Uterus (tissue), 4 donors: ENCODE measurements at regions of chr7 and their contacts with region 1.

Region 1: GRCh38 chr7:27143023-27143949 is at the start of gene HOXA5:
- DNase-seq: peak; percentile 71 to 73
- H3K4me3 ChIP-seq: peak within 1 kb of the TSS in 1 of 2 donors; percentile 13
- H3K27ac ChIP-seq: peak within 1 kb of the TSS in 1 of 2 donors; percentile 69
- H3K4me1 ChIP-seq: no peaks in the 10 kb centered on the region
- H3K27me3 ChIP-seq: no peaks in the 10 kb centered on the region
- CTCF ChIP-seq: peak in 3 of 4 experiments; percentile 57 to 86 (median 58)
- POLR2A ChIP-seq: peak; percentile 27 to 30
- total RNA-seq, gene HOXA5: 10.7 to 61.0 (median 18.9) TPM

Region 2: GRCh38 chr7:27025270-27025669 is 118.0 kb before region 1 on chr7:
- intact Hi-C with region 1: no loop called
- DNase-seq: no peak
- H3K4me3 ChIP-seq: no peak overlapping the region
- H3K27ac ChIP-seq: no peak overlapping the region
- H3K4me1 ChIP-seq: no peaks in the 10 kb centered on the region
- H3K27me3 ChIP-seq: no peaks in the 10 kb centered on the region
- CTCF ChIP-seq: no peak
- POLR2A ChIP-seq: no peak

Region 3: DNA sequence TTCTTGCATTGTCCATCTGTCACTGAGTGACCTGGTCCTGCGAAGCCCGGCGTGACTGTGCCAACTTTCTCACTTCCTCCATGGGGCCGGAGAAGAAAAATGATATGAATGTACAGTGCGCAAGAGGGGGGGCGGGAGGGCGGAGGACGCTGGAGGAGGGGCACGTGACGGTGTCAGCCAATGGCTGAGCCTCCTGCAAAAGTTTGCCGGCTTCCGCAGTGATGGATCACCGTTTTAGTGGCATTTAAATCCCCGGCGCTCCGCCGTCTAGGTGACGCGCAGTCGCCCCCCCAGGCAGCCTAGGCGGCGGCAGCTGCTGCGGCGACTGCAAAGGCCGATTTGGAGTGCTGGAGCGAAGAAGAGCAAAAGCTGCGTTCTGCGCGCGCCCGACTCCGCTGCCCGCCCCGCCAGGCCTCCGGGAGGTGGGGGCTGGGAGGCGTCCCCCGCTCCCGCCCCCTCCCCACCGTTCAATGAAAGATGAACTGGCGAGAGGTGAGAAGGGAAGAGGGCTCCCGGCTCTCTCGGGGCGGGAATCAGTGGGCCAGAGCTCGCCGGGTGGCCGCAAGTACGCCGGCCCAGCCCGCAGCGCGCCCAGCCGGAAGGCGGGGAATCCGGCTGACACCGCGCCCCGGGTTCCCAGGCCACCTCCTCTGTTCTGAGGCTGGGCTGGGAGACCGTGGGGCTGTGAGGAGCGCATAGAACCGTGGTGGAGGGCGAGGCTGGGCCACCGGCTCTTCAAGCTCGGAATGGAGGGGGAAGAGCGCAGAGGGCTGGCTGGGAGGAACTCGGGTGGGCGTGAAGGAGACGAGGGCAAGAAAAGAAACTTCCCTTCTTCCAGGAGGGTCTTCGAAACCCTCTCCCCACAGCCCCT is 47.2 kb before region 1 on chr7 and contains the start of gene HOXA1:
- intact Hi-C with region 1: loop called (anchors 10 kb)
- DNase-seq: peak; percentile 76
- H3K4me3 ChIP-seq: peak within 1 kb of the TSS; percentile 64 to 72
- H3K27ac ChIP-seq: peak within 1 kb of the TSS; percentile 59 to 74
- H3K4me1 ChIP-seq: peaks cover 8 to 13% of the 10 kb centered on the region in 2 donors
- H3K27me3 ChIP-seq: no peaks in the 10 kb centered on the region
- CTCF ChIP-seq: no peak
- POLR2A ChIP-seq: peak in 1 of 2 donors; percentile 50
- total RNA-seq, gene HOXA1: 0.28 to 2.0 (median 1.5) TPM

Region 4: DNA sequence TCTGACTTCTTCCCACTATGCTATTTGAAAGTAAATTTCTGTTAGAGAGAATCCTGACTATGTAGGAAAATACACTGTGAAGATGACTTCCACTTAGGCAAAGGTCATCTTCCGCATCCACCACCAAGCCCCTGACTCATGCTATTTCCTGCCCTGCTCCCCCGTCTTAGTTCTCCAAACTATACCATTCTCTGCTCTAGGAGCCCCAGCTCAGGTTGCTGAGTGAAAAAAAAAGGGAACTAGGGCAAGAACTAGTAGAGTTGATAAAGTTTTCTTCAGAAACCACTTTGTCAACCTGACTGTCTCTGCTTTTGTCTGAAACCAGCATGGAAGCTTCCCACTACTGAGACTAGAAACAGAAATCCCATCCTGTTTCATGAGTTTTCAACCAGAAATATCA is 196.2 kb after region 1 on chr7:
- intact Hi-C with region 1: no loop called
- DNase-seq: no peak
- H3K4me3 ChIP-seq: no peak overlapping the region
- H3K27ac ChIP-seq: no peak overlapping the region
- H3K4me1 ChIP-seq: no peaks in the 10 kb centered on the region
- H3K27me3 ChIP-seq: no peaks in the 10 kb centered on the region
- CTCF ChIP-seq: no peak
- POLR2A ChIP-seq: no peak